K562 (cell line): ENCODE measurements at regions of chr21 and their contacts with region 1.

Region 1: DNA sequence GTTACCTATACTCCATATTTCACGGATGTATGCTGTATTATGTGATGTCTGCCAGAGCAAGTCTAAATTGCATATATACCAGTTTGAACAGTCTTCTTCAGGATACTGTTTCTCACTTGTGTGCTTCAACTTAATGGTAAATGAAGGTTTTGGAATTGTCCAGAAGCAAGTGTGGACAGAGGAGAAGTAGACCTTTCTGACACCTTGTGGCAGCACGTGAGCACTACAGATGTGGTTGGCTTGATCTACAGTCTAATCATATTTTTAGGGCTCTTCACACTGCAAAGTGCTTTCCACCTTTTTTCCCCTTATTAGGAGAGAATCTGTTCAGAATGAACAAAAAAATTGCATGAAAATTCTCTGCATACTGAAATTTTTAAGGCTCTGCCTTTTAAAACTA is 10.9 kb downstream of the MORC3 start:
- DNase-seq: peak; percentile 49 to 71 (median 57)
- ATAC-seq: peak; percentile 93
- H3K4me3 ChIP-seq: no peak overlapping the region
- H3K27ac ChIP-seq: no peak overlapping the region
- H3K4me1 ChIP-seq: peaks cover 7 to 12% of the 10 kb centered on the region in 2 experiments
- H3K27me3 ChIP-seq: no peaks in the 10 kb centered on the region
- CTCF ChIP-seq: peak; percentile 72 to 88 (median 76)
- EP300 ChIP-seq: no peak
- POLR2A ChIP-seq: no peak
- RAD21 ChIP-seq: peak; percentile 72 to 88

Region 2: GRCh38 chr21:36141513-36141925 is 189.4 kb before region 1 on chr21:
- CTCF ChIA-PET with region 1: interaction called, 11 read pairs
- POLR2A ChIA-PET with region 1: no interaction called
- in situ Hi-C with region 1: loop called (anchors 5 kb)
- intact Hi-C with region 1: loop called (anchors 1 kb)
- DNase-seq: peak; percentile 68 to 90 (median 84)
- ATAC-seq: peak; percentile 98
- H3K4me3 ChIP-seq: no peak overlapping the region
- H3K27ac ChIP-seq: no peak overlapping the region
- H3K4me1 ChIP-seq: no peaks in the 10 kb centered on the region; a peak in 1 of 5 replicates
- H3K27me3 ChIP-seq: peaks cover 6 to 39% of the 10 kb centered on the region in 2 experiments; a peak in 3 of 5 replicates
- CTCF ChIP-seq: peak; percentile 93 to 98 (median 95)
- EP300 ChIP-seq: no peak
- POLR2A ChIP-seq: no peak
- RAD21 ChIP-seq: peak; percentile 96 to 98

Region 3: GRCh38 chr21:36149788-36150711 is 180.9 kb before region 1 on chr21:
- CTCF ChIA-PET with region 1: interaction called, 6 read pairs
- POLR2A ChIA-PET with region 1: interaction called, 3 read pairs
- in situ Hi-C with region 1: loop called (anchors 5 kb)
- intact Hi-C with region 1: no loop called
- DNase-seq: peak in 1 of 4 experiments; percentile 43
- ATAC-seq: peak; percentile 84
- H3K4me3 ChIP-seq: no peak overlapping the region
- H3K27ac ChIP-seq: peak overlapping the region; percentile 55; the same call in 1 of the 3 replicates
- H3K4me1 ChIP-seq: peaks cover 0 to 6% of the 10 kb centered on the region in 2 experiments; a peak in 3 of 5 replicates
- H3K27me3 ChIP-seq: peaks cover 0 to 6% of the 10 kb centered on the region in 2 experiments; a peak in 1 of 5 replicates
- CTCF ChIP-seq: no peak
- EP300 ChIP-seq: no peak
- POLR2A ChIP-seq: no peak
- RAD21 ChIP-seq: no peak

Region 4: DNA sequence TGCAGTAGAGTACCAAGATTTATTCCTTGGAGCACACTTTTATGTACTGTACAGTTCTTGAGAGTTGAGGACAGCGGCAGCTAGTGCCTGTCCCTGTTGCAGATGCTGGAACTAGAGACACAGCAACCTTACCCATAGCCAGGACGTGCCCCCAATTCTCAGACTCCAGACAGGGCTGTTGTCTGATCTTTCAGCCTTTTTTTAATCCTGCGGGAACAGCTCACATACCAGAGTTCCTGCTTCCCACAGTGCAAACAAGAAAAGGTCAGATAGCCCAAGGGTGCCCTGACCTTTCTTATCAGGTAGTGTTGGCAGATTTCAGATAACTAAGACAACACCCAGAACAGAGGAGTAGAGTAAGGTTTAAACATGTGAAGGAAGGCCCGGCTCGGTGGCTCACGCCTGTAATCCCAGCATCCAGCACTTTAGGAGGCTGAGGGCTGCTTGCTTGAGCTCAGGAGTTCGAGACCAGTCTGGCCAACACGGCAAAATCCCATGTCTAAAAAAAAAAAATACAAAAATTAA is 95.8 kb before region 1 on chr21:
- CTCF ChIA-PET with region 1: no interaction called
- POLR2A ChIA-PET with region 1: no interaction called
- in situ Hi-C with region 1: no loop called
- intact Hi-C with region 1: no loop called
- DNase-seq: no peak
- ATAC-seq: no peak
- H3K4me3 ChIP-seq: no peak overlapping the region
- H3K27ac ChIP-seq: no peak overlapping the region
- H3K4me1 ChIP-seq: peaks cover 0 to 4% of the 10 kb centered on the region in 2 experiments; a peak in 1 of 5 replicates
- H3K27me3 ChIP-seq: peaks cover 48 to 72% of the 10 kb centered on the region in 2 experiments
- CTCF ChIP-seq: no peak
- EP300 ChIP-seq: no peak
- POLR2A ChIP-seq: no peak
- RAD21 ChIP-seq: no peak

Region 5: DNA sequence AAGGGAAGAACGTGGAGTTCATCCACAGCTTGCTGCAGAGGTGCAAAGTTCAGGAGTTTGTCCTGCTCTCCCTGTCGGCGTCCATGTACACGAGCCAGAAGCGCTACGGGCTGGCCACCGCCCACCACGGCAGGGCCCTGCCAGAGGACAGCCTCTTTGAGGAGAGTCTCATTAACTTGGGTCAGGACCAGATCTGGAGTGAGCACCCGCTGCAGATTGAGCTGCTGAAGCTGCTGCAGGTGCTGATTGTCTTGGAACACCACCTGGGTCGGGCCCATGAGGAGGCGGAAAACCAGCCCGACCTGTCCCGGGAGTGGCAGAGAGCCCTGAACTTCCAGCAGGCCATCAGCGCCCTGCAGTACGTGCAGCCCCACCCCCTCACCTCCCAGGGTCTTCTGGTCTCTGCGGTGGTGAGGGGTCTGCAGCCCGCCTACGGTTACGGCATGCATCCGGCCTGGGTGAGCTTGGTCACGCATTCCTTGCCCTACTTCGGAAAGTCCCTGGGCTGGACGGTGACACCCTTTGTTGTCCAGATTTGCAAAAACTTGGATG is 84.7 kb before region 1 on chr21:
- CTCF ChIA-PET with region 1: no interaction called
- POLR2A ChIA-PET with region 1: no interaction called
- in situ Hi-C with region 1: no loop called
- intact Hi-C with region 1: loop called (anchors 5 kb)
- DNase-seq: no peak
- ATAC-seq: no peak
- H3K4me3 ChIP-seq: no peak overlapping the region
- H3K27ac ChIP-seq: no peak overlapping the region
- H3K4me1 ChIP-seq: peaks cover 0 to 8% of the 10 kb centered on the region in 2 experiments; a peak in 2 of 5 replicates
- H3K27me3 ChIP-seq: peaks cover 46 to 64% of the 10 kb centered on the region in 2 experiments
- CTCF ChIP-seq: no peak
- EP300 ChIP-seq: no peak
- POLR2A ChIP-seq: no peak
- RAD21 ChIP-seq: no peak

Region 6: GRCh38 chr21:36282568-36283230 is 48.2 kb before region 1 on chr21:
- CTCF ChIA-PET with region 1: no interaction called
- POLR2A ChIA-PET with region 1: interaction called, 4 read pairs
- in situ Hi-C with region 1: no loop called
- intact Hi-C with region 1: loop called (anchors 5 kb)
- DNase-seq: no peak
- ATAC-seq: no peak
- H3K4me3 ChIP-seq: no peak overlapping the region
- H3K27ac ChIP-seq: no peak overlapping the region
- H3K4me1 ChIP-seq: 0 out of 5 replicates have a peak, but pooled peaks cover 0 to 5% of the 10 kb centered on the region in 2 experiments
- H3K27me3 ChIP-seq: peaks cover 22 to 30% of the 10 kb centered on the region in 2 experiments
- CTCF ChIP-seq: no peak
- EP300 ChIP-seq: no peak
- POLR2A ChIP-seq: no peak
- RAD21 ChIP-seq: no peak

Region 7: DNA sequence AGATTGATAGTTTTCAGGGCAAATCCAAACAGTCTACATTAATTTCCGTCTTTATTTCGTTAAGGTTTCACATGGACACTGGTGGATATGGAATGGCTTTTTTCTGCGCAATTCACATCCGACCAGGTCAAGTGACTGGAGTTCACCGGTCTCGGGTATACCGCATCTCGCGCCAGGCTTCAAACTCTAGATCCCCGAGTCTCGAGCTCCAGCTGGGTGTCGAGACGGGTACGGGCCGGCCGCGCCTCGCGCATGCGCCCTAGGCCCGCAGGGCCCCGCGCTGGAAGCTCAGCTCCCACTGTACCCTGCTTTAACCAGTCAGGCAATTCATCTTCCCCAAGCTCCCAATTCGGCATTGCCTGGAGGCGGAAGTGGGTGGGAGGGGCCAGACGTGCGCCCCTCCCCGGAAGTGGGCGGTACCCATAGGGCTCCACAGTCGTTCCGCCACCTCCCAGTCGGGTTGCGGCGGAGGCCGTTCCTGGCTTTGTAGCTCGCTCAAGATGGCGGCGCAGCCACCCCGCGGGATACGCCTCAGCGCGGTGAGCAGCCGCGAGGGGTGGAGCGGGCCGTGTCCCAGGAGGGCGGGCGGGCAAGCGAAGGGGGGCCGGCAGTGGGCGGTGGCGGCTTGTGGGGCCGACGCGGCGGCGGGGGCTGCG is 11.0 kb before region 1 on chr21 and contains the start of gene MORC3:
- CTCF ChIA-PET with region 1: no interaction called
- POLR2A ChIA-PET with region 1: interaction called, 12 read pairs
- in situ Hi-C with region 1: no loop called
- intact Hi-C with region 1: no loop called
- DNase-seq: peak; percentile 99 to 100 (median 99)
- ATAC-seq: peak; percentile 92
- H3K4me3 ChIP-seq: peak within 1 kb of the TSS; percentile 95
- H3K27ac ChIP-seq: peak within 1 kb of the TSS; percentile 97
- H3K4me1 ChIP-seq: peaks cover 9 to 24% of the 10 kb centered on the region in 2 experiments; a peak in 4 of 5 replicates
- H3K27me3 ChIP-seq: no peaks in the 10 kb centered on the region; a peak in 1 of 5 replicates
- CTCF ChIP-seq: peak in 1 of 3 experiments; percentile 15; a peak in 1 of 6 replicates
- EP300 ChIP-seq: peak; percentile 26; the same call in 1 of the 2 replicates
- POLR2A ChIP-seq: peak; percentile 91
- RAD21 ChIP-seq: no peak; a peak in 1 of 4 replicates
- polyA plus RNA-seq, gene MORC3: 12.7 to 20.5 TPM